Transverse colon (tissue), 4 donors: ENCODE measurements at regions of chr15 and their contacts with region 1.

Region 1: GRCh38 chr15:74768771-74769342 is 13.0 kb upstream of the CSK start:
- DNase-seq: peak; percentile 66
- H3K4me3 ChIP-seq: no peak overlapping the region
- H3K27ac ChIP-seq: no peak overlapping the region
- H3K4me1 ChIP-seq: peaks cover 9 to 24% (median 13%) of the 10 kb centered on the region in 4 donors
- H3K27me3 ChIP-seq: peaks cover 5% of the 10 kb centered on the region
- CTCF ChIP-seq: peak; percentile 86 to 92 (median 88)
- EP300 ChIP-seq: no peak
- POLR2A ChIP-seq: no peak

Region 2: GRCh38 chr15:74382004-74382816 is 386.6 kb before region 1 on chr15:
- in situ Hi-C with region 1: loop called in 2 of 4 experiments (anchors 25 kb)
- intact Hi-C with region 1: no loop called
- DNase-seq: peak; percentile 87
- H3K4me3 ChIP-seq: no peak overlapping the region
- H3K27ac ChIP-seq: no peak overlapping the region
- H3K4me1 ChIP-seq: peaks cover 0 to 10% (median 0%) of the 10 kb centered on the region in 4 donors
- H3K27me3 ChIP-seq: no peaks in the 10 kb centered on the region
- CTCF ChIP-seq: peak; percentile 79 to 94 (median 89)
- EP300 ChIP-seq: no peak
- POLR2A ChIP-seq: no peak

Region 3: GRCh38 chr15:74635228-74635627 is 133.6 kb before region 1 on chr15:
- in situ Hi-C with region 1: loop called in 3 of 4 experiments (anchors 5 kb)
- intact Hi-C with region 1: loop called (anchors 2 kb)
- DNase-seq: peak; percentile 77
- H3K4me3 ChIP-seq: no peak overlapping the region
- H3K27ac ChIP-seq: no peak overlapping the region
- H3K4me1 ChIP-seq: no peaks in the 10 kb centered on the region
- H3K27me3 ChIP-seq: no peaks in the 10 kb centered on the region
- CTCF ChIP-seq: peak; percentile 80 to 94 (median 87)
- EP300 ChIP-seq: no peak
- POLR2A ChIP-seq: no peak

Region 4: GRCh38 chr15:74642729-74643367 is 126.0 kb before region 1 on chr15:
- in situ Hi-C with region 1: loop called in 1 of 4 experiments (anchors 5 kb)
- intact Hi-C with region 1: no loop called
- DNase-seq: peak; percentile 44
- H3K4me3 ChIP-seq: no peak overlapping the region
- H3K27ac ChIP-seq: peak overlapping the region; percentile 67 to 76 (median 70)
- H3K4me1 ChIP-seq: peaks cover 9 to 43% (median 27%) of the 10 kb centered on the region in 4 donors
- H3K27me3 ChIP-seq: no peaks in the 10 kb centered on the region
- CTCF ChIP-seq: no peak
- EP300 ChIP-seq: no peak
- POLR2A ChIP-seq: no peak

Region 5: GRCh38 chr15:74799856-74800547 is 31.1 kb after region 1 on chr15:
- in situ Hi-C with region 1: no loop called
- intact Hi-C with region 1: loop called (anchors 2 kb)
- DNase-seq: peak; percentile 91
- H3K4me3 ChIP-seq: no peak overlapping the region
- H3K27ac ChIP-seq: peak overlapping the region; percentile 56 to 79 (median 66)
- H3K4me1 ChIP-seq: peaks cover 10 to 34% (median 19%) of the 10 kb centered on the region in 4 donors
- H3K27me3 ChIP-seq: no peaks in the 10 kb centered on the region
- CTCF ChIP-seq: peak; percentile 97 to 99 (median 98)
- EP300 ChIP-seq: no peak
- POLR2A ChIP-seq: no peak

Region 6: DNA sequence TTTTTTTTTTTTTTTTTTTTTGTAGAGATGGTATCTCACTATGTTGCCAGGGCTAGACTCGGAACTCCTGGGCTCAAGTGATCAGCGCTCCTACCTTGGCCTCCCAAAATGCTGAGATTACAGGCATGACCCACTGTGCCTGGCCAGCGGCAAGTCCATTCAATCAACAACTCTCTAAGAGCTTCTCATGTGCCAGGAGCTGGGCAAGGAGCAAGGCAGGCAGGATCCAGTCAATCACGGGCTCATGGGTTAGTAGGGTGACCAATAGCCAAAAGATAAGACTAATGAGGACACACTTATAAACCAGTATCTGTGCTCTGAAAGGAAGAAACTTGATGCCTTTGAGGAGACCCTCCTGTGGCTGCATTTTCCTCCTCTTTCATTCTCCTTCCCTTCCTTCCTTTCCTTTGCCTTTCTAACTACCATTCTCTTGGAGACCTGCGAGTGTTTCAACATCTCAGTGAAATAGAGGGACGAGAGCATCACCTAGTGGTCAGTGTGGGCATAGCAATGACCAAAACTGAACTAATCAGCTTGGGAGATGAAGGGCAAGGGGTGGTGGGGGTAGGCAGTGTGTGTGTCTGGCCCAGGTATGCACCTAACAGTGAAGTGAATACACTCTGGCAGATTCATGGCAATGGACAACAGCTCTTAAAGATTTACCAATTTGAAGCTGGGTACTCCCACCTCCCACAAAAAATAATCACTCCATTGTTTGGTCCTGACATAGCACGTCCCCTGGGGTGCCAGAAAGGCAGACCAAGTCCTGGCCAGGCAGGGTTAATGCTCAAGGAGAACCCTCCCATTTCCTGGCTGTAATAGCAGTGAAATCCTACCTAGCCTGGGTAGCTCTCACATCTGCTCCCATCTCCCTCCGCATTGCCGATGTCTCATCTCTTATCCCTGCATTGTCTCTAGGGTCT is 181.5 kb after region 1 on chr15:
- in situ Hi-C with region 1: loop called in 3 of 4 experiments (anchors 5 to 10 kb)
- intact Hi-C with region 1: loop called (anchors 5 kb)
- DNase-seq: peak; percentile 84
- H3K4me3 ChIP-seq: no peak overlapping the region
- H3K27ac ChIP-seq: no peak overlapping the region
- H3K4me1 ChIP-seq: peaks cover 13 to 19% (median 15%) of the 10 kb centered on the region in 4 donors
- H3K27me3 ChIP-seq: no peaks in the 10 kb centered on the region
- CTCF ChIP-seq: peak; percentile 96 to 99 (median 99)
- EP300 ChIP-seq: no peak
- POLR2A ChIP-seq: no peak